ENCODE measurements at regions of chr19 and their contacts with region 1.

Region 1: GRCh38 chr19:18588611-18589379 is at the start of gene REX1BD:
- DNase-seq: no peak
- H3K4me3 ChIP-seq: peak within 1 kb of the TSS; percentile 76
- H3K27me3 ChIP-seq: no peaks in the 10 kb centered on the region
- CTCF ChIP-seq: peak; percentile 89
- polyA plus RNA-seq, gene REX1BD: 22.4 and 24.3 TPM in 2 replicates

Region 2: GRCh38 chr19:18450931-18451845 is 137.6 kb before region 1 on chr19:
- CTCF ChIA-PET with region 1: interaction called, 10 read pairs
- POLR2A ChIA-PET with region 1: no interaction called
- DNase-seq: no peak
- H3K4me3 ChIP-seq: no peak overlapping the region
- H3K27me3 ChIP-seq: no peaks in the 10 kb centered on the region
- CTCF ChIP-seq: peak; percentile 98

Region 3: GRCh38 chr19:18529782-18530181 is 59.0 kb before region 1 on chr19:
- CTCF ChIA-PET with region 1: no interaction called
- POLR2A ChIA-PET with region 1: no interaction called
- DNase-seq: no peak
- H3K4me3 ChIP-seq: no peak overlapping the region
- H3K27me3 ChIP-seq: no peaks in the 10 kb centered on the region
- CTCF ChIP-seq: no peak

Region 4: DNA sequence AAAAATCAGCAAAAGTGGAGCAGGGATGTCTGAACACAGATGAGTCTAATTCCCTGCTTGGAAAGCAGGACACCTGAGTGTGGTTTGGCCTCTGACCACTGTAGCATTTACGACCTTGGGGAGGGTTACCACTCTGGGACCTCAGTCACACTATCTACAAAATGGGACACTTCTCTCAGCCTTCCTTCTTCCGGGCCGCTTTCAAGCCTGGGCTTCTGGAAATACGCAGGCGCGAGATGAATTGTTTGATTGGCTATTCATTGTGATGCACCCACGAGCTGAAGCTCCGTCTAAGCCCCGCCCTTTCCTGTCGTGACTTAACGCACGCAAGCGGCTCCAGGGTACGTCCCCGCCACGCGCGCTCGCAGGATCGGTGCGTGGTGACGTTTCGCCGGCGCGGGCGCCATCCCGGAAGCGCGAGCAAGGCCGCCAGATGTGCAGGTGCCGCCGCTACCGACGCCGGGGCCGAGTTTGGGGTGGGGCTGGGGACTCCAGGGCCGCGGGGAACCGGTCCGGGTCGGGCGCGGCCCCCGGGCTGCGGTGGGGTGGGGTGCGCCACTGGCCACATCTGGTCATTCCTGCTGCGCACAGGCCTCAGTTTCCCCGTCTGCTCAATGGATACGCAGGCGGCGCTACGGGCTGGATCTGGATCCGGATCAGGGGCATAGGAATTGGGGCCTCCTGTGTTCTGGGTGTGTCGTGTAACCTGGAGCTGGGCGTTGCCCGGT is 31.2 kb before region 1 on chr19 and contains the start of gene KXD1:
- CTCF ChIA-PET with region 1: interaction called, 8 read pairs
- POLR2A ChIA-PET with region 1: interaction called, 10 read pairs
- DNase-seq: peak; percentile 97
- H3K4me3 ChIP-seq: peak within 1 kb of the TSS; percentile 93
- H3K27me3 ChIP-seq: no peaks in the 10 kb centered on the region
- CTCF ChIP-seq: no peak
- polyA plus RNA-seq, gene KXD1: 100 and 163 TPM in 2 replicates

Region 5: DNA sequence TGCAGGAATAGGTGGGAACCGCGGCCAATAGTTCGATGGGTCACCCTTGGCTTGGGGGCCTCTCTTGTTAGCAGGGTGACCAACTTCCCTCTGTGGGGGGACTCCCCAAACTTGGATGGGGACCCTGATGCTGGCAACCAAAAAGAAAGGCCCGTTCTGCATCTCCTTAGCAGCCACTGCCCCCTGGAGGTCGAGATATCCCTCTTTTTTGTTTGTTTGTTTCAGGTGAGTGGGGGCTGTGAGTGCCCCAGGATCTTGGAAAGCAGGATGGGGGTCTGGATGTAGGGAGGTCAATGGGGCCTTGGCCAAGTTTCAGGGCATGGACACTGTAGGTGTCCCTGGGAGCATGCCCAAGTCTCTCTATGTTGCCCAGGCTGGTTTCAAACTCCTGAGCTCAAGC is 87.0 kb after region 1 on chr19:
- CTCF ChIA-PET with region 1: interaction called, 17 read pairs
- POLR2A ChIA-PET with region 1: no interaction called
- DNase-seq: no peak
- H3K4me3 ChIP-seq: no peak overlapping the region
- H3K27me3 ChIP-seq: no peaks in the 10 kb centered on the region
- CTCF ChIP-seq: peak; percentile 51

Region 6: GRCh38 chr19:18770663-18771327 is 182.0 kb after region 1 on chr19:
- CTCF ChIA-PET with region 1: no interaction called
- POLR2A ChIA-PET with region 1: no interaction called
- DNase-seq: no peak
- H3K4me3 ChIP-seq: no peak overlapping the region
- H3K27me3 ChIP-seq: no peaks in the 10 kb centered on the region
- CTCF ChIP-seq: no peak

Region 7: DNA sequence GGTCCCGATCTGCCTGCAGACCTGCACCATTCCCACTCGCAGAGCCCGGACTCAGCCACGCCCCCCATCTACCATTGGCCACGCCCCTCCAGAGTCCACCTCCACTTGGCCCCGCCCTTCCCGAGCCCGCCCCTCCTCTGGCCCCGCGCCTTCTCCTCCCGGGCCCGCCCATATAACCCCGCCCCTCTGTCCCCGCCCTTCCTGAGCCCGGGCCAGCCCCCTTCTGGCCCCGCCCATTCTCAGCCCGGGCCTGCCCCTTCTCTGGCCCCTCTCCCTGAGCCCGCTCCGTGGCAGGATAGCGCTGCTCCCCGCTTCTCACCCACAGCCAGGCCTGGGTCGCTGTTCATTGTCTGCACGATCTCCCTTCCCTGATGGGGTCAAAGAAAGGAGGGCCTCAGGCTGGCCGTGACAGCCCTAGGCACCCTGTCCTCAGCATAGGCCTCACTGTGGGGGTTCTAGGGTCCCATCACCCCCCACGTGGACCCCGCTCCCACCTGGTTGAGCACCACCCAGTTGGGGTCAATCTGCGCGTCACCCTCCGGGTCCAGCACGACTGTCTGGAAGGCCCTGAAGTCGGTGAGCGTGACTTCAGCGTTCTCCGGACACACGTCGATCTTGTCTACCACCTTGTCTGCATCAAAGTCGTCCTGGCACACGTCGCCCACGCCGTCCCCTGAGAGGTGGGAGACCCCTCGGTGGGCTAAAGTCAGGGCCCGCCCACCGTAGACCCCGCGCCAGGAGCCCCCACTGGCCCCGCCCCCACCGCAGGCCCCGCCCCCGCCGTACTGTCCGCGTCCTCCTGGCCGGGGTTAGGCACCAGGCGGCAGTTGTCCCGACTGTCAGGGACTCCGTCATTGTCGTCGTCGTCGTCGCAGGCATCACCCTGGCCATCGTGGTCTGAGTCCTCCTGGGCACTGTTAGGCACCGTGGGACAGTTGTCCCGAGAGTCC is 196.7 kb after region 1 on chr19:
- CTCF ChIA-PET with region 1: no interaction called
- POLR2A ChIA-PET with region 1: no interaction called
- DNase-seq: no peak
- H3K4me3 ChIP-seq: no peak overlapping the region
- H3K27me3 ChIP-seq: peaks cover 21% of the 10 kb centered on the region
- CTCF ChIP-seq: no peak

Region 8: GRCh38 chr19:18865973-18866799 is 277.4 kb after region 1 on chr19:
- CTCF ChIA-PET with region 1: interaction called, 17 read pairs
- POLR2A ChIA-PET with region 1: no interaction called
- DNase-seq: no peak
- H3K4me3 ChIP-seq: no peak overlapping the region
- H3K27me3 ChIP-seq: no peaks in the 10 kb centered on the region
- CTCF ChIP-seq: peak; percentile 73

Measured in BJ (cell line).